CD14-positive monocyte (primary cell): ENCODE measurements at regions of chr6 and their contacts with region 1.

Region 1: DNA sequence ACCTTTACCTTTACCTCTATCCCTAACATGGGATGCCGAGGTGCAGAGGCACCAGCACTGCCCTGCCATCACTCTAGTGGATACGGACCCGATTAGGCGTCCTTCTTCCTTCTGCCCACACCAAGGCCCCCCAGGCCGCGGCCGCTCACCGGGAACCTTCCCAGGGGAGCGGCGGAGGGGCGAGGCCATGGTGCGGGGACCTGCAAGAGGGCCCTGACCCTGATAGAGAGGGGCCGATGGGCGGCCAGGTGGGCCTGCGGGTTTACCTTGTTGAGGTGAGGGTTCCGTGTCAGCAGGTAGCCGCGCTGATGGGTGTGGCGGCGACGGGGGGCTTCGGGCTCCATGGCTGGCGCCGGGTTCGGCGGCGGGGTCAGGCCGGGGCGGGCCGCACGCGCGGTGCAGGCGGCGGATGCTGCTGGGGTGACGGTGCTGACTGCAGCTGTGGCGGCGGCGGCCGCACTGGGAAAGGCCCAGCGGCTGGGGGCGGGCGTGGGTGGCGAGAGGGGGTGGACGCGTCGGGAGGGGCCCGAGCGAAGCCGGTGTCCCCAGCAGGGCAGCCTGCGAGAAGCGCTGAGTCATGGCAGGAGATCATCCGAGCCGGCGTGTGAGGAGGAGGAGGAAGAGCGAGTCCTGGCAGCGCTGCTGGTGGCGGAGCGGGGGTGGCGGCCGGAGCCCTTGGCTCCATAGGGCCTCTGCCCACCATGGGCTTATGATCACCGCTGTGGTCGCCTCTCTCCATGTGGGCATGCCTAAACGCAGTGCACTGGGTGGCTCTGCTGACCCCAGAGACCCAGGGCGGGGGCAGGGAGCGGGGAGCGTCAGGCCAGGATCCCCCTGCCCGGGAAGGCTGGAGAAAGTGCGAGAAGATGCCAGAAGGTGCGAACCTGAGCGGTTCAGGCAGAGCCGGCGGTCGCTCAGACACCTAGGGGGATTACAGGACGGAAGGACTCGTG is at the start of gene ME1:
- DNase-seq: peak; percentile 79 to 94 (median 84)
- H3K4me3 ChIP-seq: peak within 1 kb of the TSS; percentile 30 to 74 (median 31)
- H3K4me3 Mint-ChIP-seq: peak within 1 kb of the TSS; percentile 75 to 91
- H3K27ac ChIP-seq: peak within 1 kb of the TSS in 1 of 2 donors; percentile 52
- H3K27ac Mint-ChIP-seq: peak within 1 kb of the TSS in 5 of 7 donors; percentile 59 to 78 (median 68)
- H3K4me1 ChIP-seq: peaks cover 31 to 51% of the 10 kb centered on the region in 2 donors
- H3K4me1 Mint-ChIP-seq: peaks cover 35% of the 10 kb centered on the region
- H3K27me3 ChIP-seq: peaks cover 12 to 19% of the 10 kb centered on the region in 2 donors
- H3K27me3 Mint-ChIP-seq: peaks cover 16 to 30% (median 18%) of the 10 kb centered on the region in 3 donors
- CTCF ChIP-seq: no peak
- polyA plus RNA-seq, gene ME1: 1.3 to 4.0 (median 2.1) TPM

Region 2: GRCh38 chr6:83467620-83468036 is 36.7 kb after region 1 on chr6:
- intact Hi-C with region 1: loop called (anchors 5 kb)
- DNase-seq: peak; percentile 90 to 93 (median 91)
- H3K4me3 ChIP-seq: peak overlapping the region in 1 of 3 experiments; percentile 40
- H3K4me3 Mint-ChIP-seq: peak overlapping the region in 1 of 2 donors; percentile 75
- H3K27ac ChIP-seq: peak overlapping the region; percentile 76 to 82
- H3K27ac Mint-ChIP-seq: peak overlapping the region; percentile 90 to 95 (median 94)
- H3K4me1 ChIP-seq: peaks cover 42 to 49% of the 10 kb centered on the region in 2 donors
- H3K4me1 Mint-ChIP-seq: peaks cover 43% of the 10 kb centered on the region
- H3K27me3 ChIP-seq: no peaks in the 10 kb centered on the region
- H3K27me3 Mint-ChIP-seq: peaks cover 0 to 5% (median 0%) of the 10 kb centered on the region in 3 donors
- CTCF ChIP-seq: no peak